Ovary (tissue), 10 donors: ENCODE measurements at regions of chr12 and their contacts with region 1.

Region 1: GRCh38 chr12:116434155-116435011 is 124.8 kb upstream of the MAP1LC3B2 start:
- DNase-seq: peak; percentile 80 to 91 (median 84)
- H3K4me3 ChIP-seq: peak overlapping the region; percentile 28
- H3K27ac ChIP-seq: peak overlapping the region; percentile 18 to 44
- H3K4me1 ChIP-seq: peaks cover 5% of the 10 kb centered on the region
- H3K27me3 ChIP-seq: no peaks in the 10 kb centered on the region
- CTCF ChIP-seq: no peak
- EP300 ChIP-seq: peak; percentile 64
- POLR2A ChIP-seq: no peak

Region 2: GRCh38 chr12:116591855-116592637 is 157.7 kb after region 1 on chr12:
- intact Hi-C with region 1: loop called in 1 of 4 experiments (anchors 5 kb)
- DNase-seq: peak; percentile 61 to 87 (median 71)
- H3K4me3 ChIP-seq: no peak overlapping the region
- H3K27ac ChIP-seq: peak overlapping the region in 1 of 2 donors; percentile 23
- H3K4me1 ChIP-seq: peaks cover 23% of the 10 kb centered on the region
- H3K27me3 ChIP-seq: no peaks in the 10 kb centered on the region
- CTCF ChIP-seq: no peak
- EP300 ChIP-seq: no peak
- POLR2A ChIP-seq: no peak